CD8-positive, alpha-beta T cell (primary cell): ENCODE measurements at regions of chr14 and their contacts with region 1.

Region 1: GRCh38 chr14:69611201-69612011 is at the start of gene SUSD6:
- DNase-seq: peak; percentile 79 to 94 (median 87)
- ATAC-seq: peak; percentile 84
- H3K4me3 ChIP-seq: peak within 1 kb of the TSS; percentile 57 to 67
- H3K4me3 Mint-ChIP-seq: peak within 1 kb of the TSS; percentile 89
- H3K27ac ChIP-seq: peak within 1 kb of the TSS; percentile 62 to 90
- H3K27ac Mint-ChIP-seq: peak within 1 kb of the TSS; percentile 100
- H3K4me1 ChIP-seq: peaks cover 54% of the 10 kb centered on the region
- H3K4me1 Mint-ChIP-seq: peaks cover 54% of the 10 kb centered on the region
- H3K27me3 ChIP-seq: no peaks in the 10 kb centered on the region
- H3K27me3 Mint-ChIP-seq: no peaks in the 10 kb centered on the region
- CTCF ChIP-seq: no peak
- total RNA-seq, gene SUSD6: 86.4 to 92.2 TPM

Region 2: DNA sequence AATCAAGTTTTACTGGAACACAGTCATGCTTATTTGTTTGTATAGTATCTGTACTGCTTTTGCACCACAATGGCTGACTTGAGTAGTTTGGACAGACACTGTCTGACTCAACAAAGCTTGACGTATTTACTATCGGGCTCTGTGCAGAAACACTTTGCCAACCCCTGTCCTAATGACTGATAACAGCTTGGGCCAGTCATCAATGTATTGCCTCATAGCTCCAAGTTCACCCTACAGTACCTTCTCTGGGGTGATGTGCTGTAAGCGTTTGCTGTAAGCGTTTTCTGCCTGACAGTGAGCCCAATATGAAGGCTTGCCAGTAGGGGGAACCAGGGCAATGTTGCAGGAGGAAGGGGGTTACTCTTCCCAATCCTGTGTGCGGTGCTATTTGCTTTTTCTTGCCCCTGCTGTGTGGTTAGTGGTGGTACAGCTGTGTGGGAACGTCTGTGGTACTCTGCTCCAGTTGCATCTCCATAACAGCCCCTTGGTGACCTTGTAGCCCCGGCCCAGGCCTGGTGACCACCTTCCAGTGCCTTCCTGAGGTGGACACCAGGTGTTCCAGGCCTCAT is 31.3 kb before region 1 on chr14:
- CTCF ChIA-PET with region 1: interaction called, 59 read pairs
- POLR2A ChIA-PET with region 1: no interaction called
- intact Hi-C with region 1: no loop called
- DNase-seq: peak in 2 of 9 experiments; percentile 10 to 17
- ATAC-seq: no peak
- H3K4me3 ChIP-seq: no peak overlapping the region
- H3K4me3 Mint-ChIP-seq: no peak overlapping the region
- H3K27ac ChIP-seq: no peak overlapping the region
- H3K27ac Mint-ChIP-seq: no peak overlapping the region
- H3K4me1 ChIP-seq: no peaks in the 10 kb centered on the region
- H3K4me1 Mint-ChIP-seq: no peaks in the 10 kb centered on the region
- H3K27me3 ChIP-seq: peaks cover 4 to 6% of the 10 kb centered on the region in 2 experiments
- H3K27me3 Mint-ChIP-seq: peaks cover 18% of the 10 kb centered on the region
- CTCF ChIP-seq: no peak

Region 3: GRCh38 chr14:69593018-69593677 is 18.3 kb before region 1 on chr14:
- CTCF ChIA-PET with region 1: interaction called, 14 read pairs
- POLR2A ChIA-PET with region 1: no interaction called
- intact Hi-C with region 1: no loop called
- DNase-seq: no peak
- ATAC-seq: no peak
- H3K4me3 ChIP-seq: no peak overlapping the region
- H3K4me3 Mint-ChIP-seq: no peak overlapping the region
- H3K27ac ChIP-seq: no peak overlapping the region
- H3K27ac Mint-ChIP-seq: no peak overlapping the region
- H3K4me1 ChIP-seq: no peaks in the 10 kb centered on the region
- H3K4me1 Mint-ChIP-seq: no peaks in the 10 kb centered on the region
- H3K27me3 ChIP-seq: no peaks in the 10 kb centered on the region
- H3K27me3 Mint-ChIP-seq: no peaks in the 10 kb centered on the region
- CTCF ChIP-seq: no peak

Region 4: GRCh38 chr14:69643443-69644164 is 32.2 kb after region 1 on chr14:
- CTCF ChIA-PET with region 1: interaction called, 3 read pairs
- POLR2A ChIA-PET with region 1: no interaction called
- intact Hi-C with region 1: loop called in 1 of 2 experiments (anchors 2 kb)
- DNase-seq: peak in 6 of 9 experiments; percentile 17 to 57 (median 36)
- ATAC-seq: peak; percentile 93
- H3K4me3 ChIP-seq: no peak overlapping the region
- H3K4me3 Mint-ChIP-seq: no peak overlapping the region
- H3K27ac ChIP-seq: no peak overlapping the region
- H3K27ac Mint-ChIP-seq: no peak overlapping the region
- H3K4me1 ChIP-seq: peaks cover 34% of the 10 kb centered on the region
- H3K4me1 Mint-ChIP-seq: peaks cover 67% of the 10 kb centered on the region
- H3K27me3 ChIP-seq: no peaks in the 10 kb centered on the region
- H3K27me3 Mint-ChIP-seq: no peaks in the 10 kb centered on the region
- CTCF ChIP-seq: no peak

Region 5: GRCh38 chr14:69726761-69727511 is 115.5 kb after region 1 on chr14:
- CTCF ChIA-PET with region 1: interaction called, 167 read pairs
- POLR2A ChIA-PET with region 1: no interaction called
- intact Hi-C with region 1: no loop called
- DNase-seq: peak; percentile 68 to 93 (median 84)
- ATAC-seq: peak; percentile 85
- H3K4me3 ChIP-seq: peak overlapping the region; percentile 48 to 60
- H3K4me3 Mint-ChIP-seq: peak overlapping the region; percentile 73
- H3K27ac ChIP-seq: peak overlapping the region in 1 of 2 experiments; percentile 50
- H3K27ac Mint-ChIP-seq: peak overlapping the region; percentile 76
- H3K4me1 ChIP-seq: peaks cover 12% of the 10 kb centered on the region
- H3K4me1 Mint-ChIP-seq: peaks cover 6% of the 10 kb centered on the region
- H3K27me3 ChIP-seq: no peaks in the 10 kb centered on the region
- H3K27me3 Mint-ChIP-seq: no peaks in the 10 kb centered on the region
- CTCF ChIP-seq: peak; percentile 95

Region 6: GRCh38 chr14:70600382-70601157 is 989.2 kb after region 1 on chr14 and contains the start of gene MED6:
- CTCF ChIA-PET with region 1: no interaction called
- POLR2A ChIA-PET with region 1: no interaction called
- intact Hi-C with region 1: loop called in 1 of 2 experiments (anchors 10 kb)
- DNase-seq: peak; percentile 83 to 96 (median 94)
- ATAC-seq: peak; percentile 100
- H3K4me3 ChIP-seq: peak within 1 kb of the TSS; percentile 90 to 99
- H3K4me3 Mint-ChIP-seq: peak within 1 kb of the TSS; percentile 99
- H3K27ac ChIP-seq: peak within 1 kb of the TSS; percentile 92 to 96
- H3K27ac Mint-ChIP-seq: peak within 1 kb of the TSS; percentile 99
- H3K4me1 ChIP-seq: peaks cover 20% of the 10 kb centered on the region
- H3K4me1 Mint-ChIP-seq: peaks cover 30% of the 10 kb centered on the region
- H3K27me3 ChIP-seq: no peaks in the 10 kb centered on the region
- H3K27me3 Mint-ChIP-seq: no peaks in the 10 kb centered on the region
- CTCF ChIP-seq: no peak
- total RNA-seq, gene MED6: 116 to 119 TPM